HEK293T (cell line): ENCODE measurements at regions of chr4 and their contacts with region 1.

Region 1: DNA sequence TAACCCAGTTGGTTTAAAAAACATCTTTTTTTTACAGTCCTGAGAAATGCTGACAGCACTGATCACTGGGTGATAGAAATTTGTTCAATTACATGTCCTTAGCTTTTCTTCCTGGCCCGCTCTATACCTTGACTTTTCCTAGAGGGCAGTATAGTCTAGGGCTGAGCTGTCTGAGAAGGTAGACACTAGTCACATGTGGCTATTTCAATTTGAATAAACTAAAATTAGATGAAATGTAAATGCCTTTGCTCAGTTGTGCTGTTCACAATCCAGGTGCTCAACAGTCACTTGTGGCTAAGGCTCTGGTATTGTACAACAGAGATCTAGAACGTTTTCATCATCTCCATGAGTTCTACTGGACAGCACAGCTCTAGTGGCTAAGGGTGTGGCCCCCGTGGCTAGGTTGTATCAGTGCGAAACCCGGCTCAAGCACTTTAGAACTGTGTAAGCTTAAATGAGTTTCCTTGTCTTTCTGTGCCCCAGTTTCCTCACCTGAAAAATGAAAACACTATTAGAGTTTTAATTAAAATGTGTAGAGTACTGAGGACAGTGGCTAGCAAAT is 111.6 kb upstream of the WDR17 start:
- DNase-seq: peak; percentile 16

Region 2: GRCh38 chr4:176340871-176341685 is 387.0 kb after region 1 on chr4:
- CTCF ChIA-PET with region 1: interaction called, 10 read pairs
- POLR2A ChIA-PET with region 1: no interaction called
- DNase-seq: peak; percentile 45